Activated naive CD4-positive, alpha-beta T cell treated with anti-CD3 and anti-CD28 coated beads for 36 hours (primary cell): ENCODE measurements at regions of chr3 and their contacts with region 1.

Region 1: DNA sequence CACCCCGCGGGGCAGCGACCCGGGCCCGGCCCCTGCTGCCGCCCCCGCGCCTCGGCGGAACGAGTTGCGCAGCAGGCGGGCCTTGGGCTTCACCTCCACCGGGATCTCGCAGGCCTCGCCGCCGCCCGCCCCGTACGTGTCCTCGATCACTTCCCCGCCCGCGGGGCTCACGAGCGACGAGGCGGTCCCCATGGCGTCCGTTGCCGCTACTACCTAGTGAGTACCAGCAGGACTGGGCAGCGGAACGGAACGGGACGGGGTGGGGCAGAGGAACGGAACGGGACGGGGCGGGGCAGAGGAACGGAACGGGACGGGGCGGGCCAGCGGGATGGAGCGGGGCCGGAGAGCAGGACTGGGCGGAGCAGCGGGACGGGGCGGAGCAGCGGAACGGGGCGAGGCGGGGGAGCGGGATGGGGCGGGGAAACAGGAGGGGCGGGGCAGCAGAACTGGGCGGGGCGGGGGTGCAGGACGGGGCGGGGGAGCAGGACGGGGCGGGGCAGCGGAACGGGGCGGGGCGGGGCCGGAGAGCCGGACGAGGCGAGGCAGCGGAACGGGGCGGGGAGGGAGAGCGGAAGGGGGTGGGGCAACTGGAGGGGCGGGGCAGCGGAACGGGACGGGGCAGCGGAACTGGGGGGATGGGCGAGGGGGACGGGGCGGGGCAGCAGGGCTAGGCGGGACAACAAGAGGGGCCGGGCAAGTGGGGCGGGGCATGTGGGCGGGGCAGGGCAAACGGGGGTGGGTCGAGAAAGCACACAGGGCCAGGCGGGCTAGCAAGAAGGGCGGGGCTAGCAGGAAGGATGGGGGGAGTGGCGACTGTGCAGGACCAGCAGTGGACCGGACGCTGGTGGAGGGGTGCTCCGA is at the start of gene NPHP3:
- DNase-seq: peak; percentile 98
- H3K4me3 Mint-ChIP-seq: peak within 1 kb of the TSS; percentile 86
- H3K27ac Mint-ChIP-seq: peak within 1 kb of the TSS; percentile 73
- H3K4me1 Mint-ChIP-seq: peaks cover 34% of the 10 kb centered on the region
- H3K27me3 Mint-ChIP-seq: no peaks in the 10 kb centered on the region
- total RNA-seq, gene NPHP3: 11.4 to 11.6 TPM

Region 2: DNA sequence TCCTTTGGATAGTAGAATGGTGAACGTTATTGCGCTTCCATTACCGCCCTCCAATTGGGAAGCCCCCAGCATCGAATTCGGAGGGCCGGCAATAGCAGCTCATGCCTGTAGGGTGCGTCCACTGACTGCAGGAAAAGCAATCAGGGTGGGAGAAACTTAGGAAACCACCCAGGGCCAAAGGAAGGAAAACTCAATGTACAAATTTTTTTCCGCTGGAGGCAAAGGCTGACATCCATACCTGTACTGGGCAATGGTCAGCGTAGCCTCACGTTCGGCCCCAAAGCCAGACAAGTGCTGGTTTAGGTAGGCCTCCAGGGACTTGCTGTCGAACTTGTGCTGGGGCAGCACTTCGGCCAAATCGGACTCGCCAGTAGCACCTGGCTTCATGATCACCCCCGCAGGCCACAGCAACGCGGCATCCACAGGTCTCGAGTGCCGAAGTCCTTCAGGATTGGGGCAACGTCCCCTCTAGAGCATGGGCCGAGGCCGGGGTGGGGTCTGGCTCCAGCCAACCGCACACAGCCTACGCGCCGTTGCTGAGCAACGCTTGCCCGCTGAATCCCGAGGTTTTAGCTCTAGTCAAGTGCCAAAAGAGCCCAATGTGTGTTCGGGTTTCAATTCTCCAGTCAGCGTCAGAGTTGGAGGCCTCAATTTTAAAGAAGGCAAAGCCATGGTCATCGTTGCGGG is 62.9 kb before region 1 on chr3 and contains the start of gene ACAD11:
- CTCF ChIA-PET with region 1: interaction called, 4 read pairs
- intact Hi-C with region 1: loop called (anchors 1 kb)
- DNase-seq: peak; percentile 64
- H3K4me3 Mint-ChIP-seq: peak within 1 kb of the TSS; percentile 95
- H3K27ac Mint-ChIP-seq: peak within 1 kb of the TSS; percentile 94
- H3K4me1 Mint-ChIP-seq: peaks cover 44% of the 10 kb centered on the region
- H3K27me3 Mint-ChIP-seq: no peaks in the 10 kb centered on the region
- total RNA-seq, gene ACAD11: 11.2 to 11.4 TPM

Region 3: DNA sequence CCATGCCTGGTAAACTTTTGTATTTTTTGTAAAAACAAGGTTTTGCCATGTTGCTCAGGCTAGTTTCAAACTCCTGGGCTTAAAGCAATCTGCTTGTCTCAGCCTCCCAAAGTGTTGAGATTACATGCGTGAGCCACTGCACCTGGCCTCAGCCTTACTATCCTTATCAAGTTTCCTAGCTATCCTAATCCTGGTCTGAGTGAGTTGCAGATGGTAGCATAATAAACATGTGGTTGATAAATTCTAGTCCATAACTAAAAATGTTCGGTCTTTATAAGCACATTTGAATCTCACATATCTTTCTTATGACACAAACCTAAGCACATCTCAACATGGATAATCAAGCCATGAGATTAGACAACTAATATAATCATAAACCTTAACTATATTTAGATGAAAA is 18.7 kb before region 1 on chr3:
- CTCF ChIA-PET with region 1: no interaction called
- intact Hi-C with region 1: no loop called
- DNase-seq: no peak
- H3K4me3 Mint-ChIP-seq: no peak overlapping the region
- H3K27ac Mint-ChIP-seq: no peak overlapping the region
- H3K4me1 Mint-ChIP-seq: peaks cover under 1% of the 10 kb centered on the region
- H3K27me3 Mint-ChIP-seq: no peaks in the 10 kb centered on the region

Region 4: DNA sequence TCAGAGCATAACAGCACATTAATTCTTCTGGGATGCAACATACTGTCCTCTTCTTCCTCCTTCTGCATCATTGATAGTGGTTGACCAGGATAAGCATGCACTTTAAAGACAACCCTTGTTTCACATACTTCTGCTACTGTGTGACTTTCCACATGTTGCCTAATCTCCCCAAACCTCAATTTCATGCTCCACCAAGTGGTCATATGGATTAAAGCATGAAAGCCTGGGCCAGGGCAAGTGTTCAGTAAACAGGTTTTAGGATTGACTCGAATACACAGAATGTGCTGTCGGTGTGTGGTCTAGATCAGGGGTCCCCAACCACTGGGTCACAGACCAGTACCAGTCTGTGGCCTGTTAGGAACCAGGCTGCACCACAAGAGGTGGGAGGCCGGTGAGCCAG is 655.0 kb after region 1 on chr3:
- CTCF ChIA-PET with region 1: interaction called, 19 read pairs
- intact Hi-C with region 1: loop called (anchors 1 kb)
- DNase-seq: no peak
- H3K4me3 Mint-ChIP-seq: no peak overlapping the region
- H3K27ac Mint-ChIP-seq: no peak overlapping the region
- H3K4me1 Mint-ChIP-seq: no peaks in the 10 kb centered on the region
- H3K27me3 Mint-ChIP-seq: no peaks in the 10 kb centered on the region

Region 5: GRCh38 chr3:133494469-133494868 is 772.1 kb after region 1 on chr3:
- CTCF ChIA-PET with region 1: no interaction called
- intact Hi-C with region 1: loop called (anchors 5 kb)
- DNase-seq: peak; percentile 35
- H3K4me3 Mint-ChIP-seq: no peak overlapping the region
- H3K27ac Mint-ChIP-seq: no peak overlapping the region
- H3K4me1 Mint-ChIP-seq: peaks cover 44% of the 10 kb centered on the region
- H3K27me3 Mint-ChIP-seq: no peaks in the 10 kb centered on the region

Region 6: GRCh38 chr3:133661454-133662277 is 939.3 kb after region 1 on chr3 and contains the start of gene TOPBP1:
- CTCF ChIA-PET with region 1: no interaction called
- intact Hi-C with region 1: loop called (anchors 1 kb)
- DNase-seq: peak; percentile 94
- H3K4me3 Mint-ChIP-seq: peak within 1 kb of the TSS; percentile 98
- H3K27ac Mint-ChIP-seq: peak within 1 kb of the TSS; percentile 98
- H3K4me1 Mint-ChIP-seq: peaks cover 28% of the 10 kb centered on the region
- H3K27me3 Mint-ChIP-seq: no peaks in the 10 kb centered on the region
- total RNA-seq, gene TOPBP1: 65.4 to 65.8 TPM

Region 7: GRCh38 chr3:134485718-134486576 is 1763.6 kb after region 1 on chr3 and contains the starts of genes ANAPC13 and CEP63:
- CTCF ChIA-PET with region 1: no interaction called
- intact Hi-C with region 1: loop called (anchors 1 kb)
- DNase-seq: peak; percentile 97
- H3K4me3 Mint-ChIP-seq: peak within 1 kb of the TSS; percentile 87
- H3K27ac Mint-ChIP-seq: peak within 1 kb of the TSS; percentile 98
- H3K4me1 Mint-ChIP-seq: peaks cover 45% of the 10 kb centered on the region
- H3K27me3 Mint-ChIP-seq: no peaks in the 10 kb centered on the region
- total RNA-seq, gene ANAPC13: 42.6 to 44.7 TPM
- total RNA-seq, gene CEP63: 26.9 to 27.0 TPM